ENCODE measurements at regions of chr11 and their contacts with region 1.

Region 1: DNA sequence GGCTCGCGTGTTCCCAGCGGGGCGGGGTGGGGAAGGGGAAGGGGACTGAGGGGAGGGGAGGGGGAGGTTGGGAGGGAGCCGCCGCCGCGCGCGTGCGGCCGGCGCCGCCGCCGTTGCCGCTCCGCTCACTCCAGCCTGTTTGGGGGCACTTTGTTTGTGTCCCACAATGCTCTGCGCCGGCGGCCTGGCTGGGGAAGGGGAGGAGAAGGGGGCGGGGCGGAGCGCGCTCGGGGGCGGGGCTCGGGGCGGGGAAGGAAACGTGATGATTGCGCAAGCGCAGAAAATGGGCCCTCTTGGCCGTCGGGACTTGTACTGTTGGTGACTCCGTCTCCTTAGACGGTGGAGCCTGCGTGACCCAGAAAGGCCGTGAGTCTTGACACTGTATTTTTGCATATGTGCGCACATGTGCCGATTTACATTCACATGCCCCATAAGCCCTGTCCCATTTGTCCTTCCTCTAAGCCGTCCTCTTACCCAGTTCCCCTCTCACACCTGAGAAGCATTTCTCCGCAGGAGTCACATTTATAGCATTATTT is at the start of gene ZBTB44:
- H3K4me3 Mint-ChIP-seq: peak within 1 kb of the TSS; percentile 83
- H3K27ac Mint-ChIP-seq: peak within 1 kb of the TSS; percentile 84
- H3K4me1 Mint-ChIP-seq: peaks cover 25% of the 10 kb centered on the region
- H3K27me3 Mint-ChIP-seq: peaks cover 11% of the 10 kb centered on the region

Region 2: DNA sequence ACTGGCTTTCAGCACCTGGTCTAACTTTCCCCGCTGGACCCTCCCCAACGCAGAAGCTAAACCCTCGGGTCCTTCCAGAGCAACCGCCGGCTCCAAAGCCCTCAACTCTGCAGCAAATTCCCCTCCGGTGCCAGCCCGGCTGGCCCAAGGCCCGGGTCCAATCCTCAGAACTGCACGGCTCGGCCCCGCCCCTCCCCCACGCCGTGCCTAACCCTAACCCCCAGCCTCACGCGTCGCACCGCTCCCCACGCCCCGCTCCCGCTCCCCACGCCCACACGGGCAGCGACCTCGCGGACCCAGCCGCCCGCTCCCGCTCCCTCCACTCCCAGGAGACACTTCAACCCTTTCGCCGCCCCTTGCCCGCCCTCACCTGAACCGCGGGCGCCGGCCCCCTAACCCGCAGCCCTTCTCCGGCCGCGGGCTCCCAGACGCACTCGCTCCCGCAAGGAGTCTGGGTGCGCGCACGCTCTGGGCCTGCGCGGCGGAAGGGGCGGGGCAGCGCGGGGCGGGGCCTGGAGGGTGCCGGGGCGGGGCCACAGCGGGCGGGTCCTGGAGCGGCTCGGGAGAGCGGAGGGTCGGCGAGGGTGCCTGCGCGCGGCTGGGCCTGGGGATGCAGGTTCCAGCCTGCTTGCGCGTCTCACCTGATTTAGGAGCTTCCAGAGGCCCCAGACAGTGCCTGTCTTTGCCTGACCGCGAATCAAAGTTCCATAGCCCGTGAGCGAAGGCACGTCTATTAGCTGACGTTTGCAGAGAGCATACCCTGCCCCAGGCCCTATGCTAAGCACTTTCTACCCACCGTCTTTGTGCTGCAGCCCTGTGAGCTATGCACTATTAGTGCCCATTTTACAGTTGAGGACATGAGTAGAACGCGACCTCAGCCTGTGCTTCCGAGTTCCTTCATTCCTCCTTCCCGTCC is 419.4 kb before region 1 on chr11 and contains the start of gene NFRKB:
- intact Hi-C with region 1: loop called (anchors 10 kb)
- H3K4me3 Mint-ChIP-seq: peak within 1 kb of the TSS; percentile 90
- H3K27ac Mint-ChIP-seq: peak within 1 kb of the TSS; percentile 94
- H3K4me1 Mint-ChIP-seq: peaks cover 38% of the 10 kb centered on the region
- H3K27me3 Mint-ChIP-seq: no peaks in the 10 kb centered on the region

Region 3: DNA sequence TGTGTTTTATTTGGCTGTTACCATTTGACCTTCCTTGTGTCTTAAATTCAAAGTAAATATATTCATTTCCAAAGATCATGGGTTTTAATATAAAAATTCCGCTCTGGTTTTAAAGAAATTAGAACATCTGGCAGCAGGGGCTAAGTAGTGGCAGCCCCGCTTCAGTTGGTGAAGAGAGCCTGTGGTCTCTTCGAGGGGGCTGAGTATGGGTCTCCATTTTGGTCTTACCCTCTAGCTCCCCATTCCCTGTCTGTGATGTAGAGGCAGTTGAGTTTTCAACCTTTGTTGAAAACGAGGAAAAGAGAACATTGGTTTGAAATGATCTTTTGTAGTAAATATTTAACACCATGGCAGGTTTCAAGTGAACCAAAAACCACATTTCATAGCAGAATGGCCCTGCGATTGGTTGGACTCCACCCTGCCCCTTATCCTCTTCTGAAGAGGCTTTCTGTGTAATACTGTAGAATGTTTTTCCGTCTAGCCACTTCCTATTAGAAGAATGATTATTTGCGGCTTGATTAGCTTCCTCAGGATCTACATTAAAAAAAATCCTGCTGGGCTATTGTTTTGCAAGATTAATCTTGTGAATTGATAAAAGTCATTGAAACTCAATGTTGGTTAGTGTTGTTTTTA is 227.4 kb before region 1 on chr11:
- intact Hi-C with region 1: no loop called
- H3K4me3 Mint-ChIP-seq: peak overlapping the region; percentile 49
- H3K27ac Mint-ChIP-seq: peak overlapping the region; percentile 81
- H3K4me1 Mint-ChIP-seq: peaks cover 56% of the 10 kb centered on the region
- H3K27me3 Mint-ChIP-seq: no peaks in the 10 kb centered on the region

Region 4: DNA sequence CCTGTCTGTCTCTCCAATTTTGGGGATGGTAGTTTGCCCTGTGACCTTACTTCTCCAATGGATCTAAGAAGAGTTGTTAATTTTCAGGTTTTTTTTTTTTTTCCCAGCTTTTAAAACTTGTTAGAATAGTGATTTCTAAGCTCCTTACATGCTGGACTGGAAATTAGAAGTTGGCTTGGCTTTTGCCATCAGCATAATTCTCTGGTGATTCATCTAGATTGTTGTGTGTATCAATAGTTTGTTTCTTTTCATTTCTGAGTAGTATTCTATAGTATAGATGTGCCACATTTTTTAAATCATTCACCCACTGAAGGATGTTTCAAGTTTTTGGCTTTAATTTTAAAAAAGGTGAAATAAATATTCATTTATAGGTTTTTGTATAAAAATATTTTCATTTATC is 185.0 kb after region 1 on chr11:
- intact Hi-C with region 1: no loop called
- H3K4me3 Mint-ChIP-seq: no peak overlapping the region
- H3K27ac Mint-ChIP-seq: no peak overlapping the region
- H3K4me1 Mint-ChIP-seq: no peaks in the 10 kb centered on the region
- H3K27me3 Mint-ChIP-seq: no peaks in the 10 kb centered on the region

Region 5: DNA sequence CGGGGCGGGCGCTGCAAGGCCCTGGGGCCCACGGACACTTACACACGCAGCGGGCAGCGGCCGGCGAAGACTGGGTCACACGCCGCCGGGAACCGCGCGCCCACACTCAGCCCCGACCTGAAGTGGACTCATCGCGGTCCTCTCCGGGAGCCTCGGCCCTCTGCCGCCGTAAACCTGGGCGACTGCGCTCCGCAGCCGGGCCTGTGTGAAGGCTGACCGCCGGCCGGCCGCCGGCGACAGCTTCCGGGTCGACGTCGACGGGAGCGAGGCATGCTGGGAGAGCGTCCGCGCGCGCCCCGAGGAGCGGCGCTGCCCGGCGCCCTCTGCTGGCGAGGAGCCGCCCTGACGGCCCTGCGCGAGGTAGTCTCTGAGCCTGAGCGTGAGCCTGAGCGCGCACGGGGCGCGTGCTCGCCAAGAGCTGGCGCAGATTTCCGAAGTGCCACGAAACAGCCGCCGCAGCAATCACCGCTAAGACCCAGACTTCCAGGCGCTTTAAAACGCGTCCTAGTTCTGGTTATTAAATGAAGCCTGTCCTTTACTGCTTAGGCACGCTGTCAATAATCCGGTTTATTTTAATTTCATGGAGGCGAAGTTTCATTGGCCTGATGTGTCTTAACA is 601.5 kb after region 1 on chr11 and contains the start of gene SNX19:
- intact Hi-C with region 1: loop called (anchors 5 kb)
- H3K4me3 Mint-ChIP-seq: peak within 1 kb of the TSS; percentile 77
- H3K27ac Mint-ChIP-seq: peak within 1 kb of the TSS; percentile 89
- H3K4me1 Mint-ChIP-seq: peaks cover 38% of the 10 kb centered on the region
- H3K27me3 Mint-ChIP-seq: peaks cover 24% of the 10 kb centered on the region